Heart right ventricle (tissue), 16 donors: ENCODE measurements at regions of chr3 and their contacts with region 1.

Region 1: DNA sequence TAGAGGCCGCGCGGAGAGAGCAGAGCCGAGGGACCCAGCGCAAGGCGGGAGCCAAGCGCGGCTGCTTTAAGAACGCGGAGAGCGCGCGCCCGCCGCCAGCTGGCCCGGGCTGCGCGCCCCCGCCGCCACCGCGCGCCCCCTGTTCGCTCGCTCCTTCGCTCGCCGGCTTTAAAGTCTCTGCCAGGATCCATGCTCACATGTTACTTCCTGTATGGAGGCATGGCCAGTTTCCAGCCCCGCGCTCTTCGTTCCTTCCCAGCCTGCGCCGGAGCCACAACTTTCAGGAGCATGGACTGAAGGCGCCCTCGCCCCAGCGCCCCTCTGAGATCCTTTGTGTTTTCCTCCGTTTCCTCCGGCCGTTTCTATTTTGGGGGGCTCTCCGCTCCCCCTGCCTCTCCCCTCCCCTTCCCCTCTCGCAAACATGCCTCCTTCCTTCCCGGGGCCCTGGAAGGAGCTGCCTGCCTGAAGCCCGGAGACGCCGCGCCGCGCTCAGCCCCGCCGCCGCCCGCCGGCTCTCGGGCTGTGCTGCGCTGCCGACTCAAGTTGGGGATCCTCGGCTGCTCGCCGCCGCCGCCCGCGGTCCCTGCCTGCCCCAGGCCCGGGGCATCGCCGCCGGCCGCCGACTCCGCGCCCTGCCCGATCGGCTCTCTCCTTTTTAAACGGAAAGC is at the start of gene PTPRG:
- DNase-seq: peak; percentile 87 to 92
- ATAC-seq: peak; percentile 76 to 89 (median 80)
- H3K4me3 ChIP-seq: peak within 1 kb of the TSS; percentile 73 to 96 (median 90)
- H3K27ac ChIP-seq: peak within 1 kb of the TSS; percentile 89 to 99 (median 97)
- H3K4me1 ChIP-seq: peaks cover 5 to 40% (median 29%) of the 10 kb centered on the region in 9 donors
- H3K27me3 ChIP-seq: peaks cover 0 to 72% (median 0%) of the 10 kb centered on the region in 7 donors
- CTCF ChIP-seq: no peak
- total RNA-seq, gene PTPRG: 25.8 to 38.3 (median 33.1) TPM

Region 2: GRCh38 chr3:60126511-60127304 is 1434.8 kb before region 1 on chr3:
- intact Hi-C with region 1: no loop called
- DNase-seq: no peak
- ATAC-seq: no peak
- H3K4me3 ChIP-seq: no peak overlapping the region
- H3K27ac ChIP-seq: no peak overlapping the region
- H3K4me1 ChIP-seq: no peaks in the 10 kb centered on the region
- H3K27me3 ChIP-seq: no peaks in the 10 kb centered on the region
- CTCF ChIP-seq: no peak

Region 3: DNA sequence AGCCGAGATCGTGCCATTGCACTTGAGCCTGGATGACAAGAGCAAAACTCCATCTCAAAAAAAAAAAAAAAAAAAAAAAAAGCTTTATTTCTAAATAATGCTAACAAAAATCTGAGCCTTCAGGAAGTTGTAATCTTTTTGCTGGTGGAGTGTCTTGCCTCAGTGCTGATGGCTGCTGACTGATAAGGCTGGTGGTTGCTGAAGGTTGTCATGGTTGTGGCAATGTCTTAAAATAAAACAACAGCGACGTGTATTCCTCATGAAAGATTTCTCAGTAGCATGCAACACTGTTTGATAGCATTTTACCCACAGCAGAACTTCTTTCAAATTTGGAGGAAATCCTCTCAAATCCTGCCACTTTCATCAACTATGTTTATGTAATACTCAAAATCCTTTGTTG is 77.5 kb before region 1 on chr3:
- intact Hi-C with region 1: loop called in 1 of 10 experiments (anchors 10 kb)
- DNase-seq: no peak
- ATAC-seq: no peak
- H3K4me3 ChIP-seq: no peak overlapping the region
- H3K27ac ChIP-seq: no peak overlapping the region
- H3K4me1 ChIP-seq: no peaks in the 10 kb centered on the region
- H3K27me3 ChIP-seq: no peaks in the 10 kb centered on the region
- CTCF ChIP-seq: no peak

Region 4: GRCh38 chr3:61719278-61719977 is 157.9 kb after region 1 on chr3:
- intact Hi-C with region 1: loop called in 1 of 10 experiments (anchors 10 kb)
- DNase-seq: peak; percentile 23 to 28
- ATAC-seq: peak in 7 of 8 donors; percentile 81 to 90 (median 84)
- H3K4me3 ChIP-seq: no peak overlapping the region
- H3K27ac ChIP-seq: peak overlapping the region in 7 of 10 donors; percentile 48 to 74 (median 52)
- H3K4me1 ChIP-seq: peaks cover 0 to 68% (median 31%) of the 10 kb centered on the region in 9 donors
- H3K27me3 ChIP-seq: no peaks in the 10 kb centered on the region
- CTCF ChIP-seq: no peak

Region 5: DNA sequence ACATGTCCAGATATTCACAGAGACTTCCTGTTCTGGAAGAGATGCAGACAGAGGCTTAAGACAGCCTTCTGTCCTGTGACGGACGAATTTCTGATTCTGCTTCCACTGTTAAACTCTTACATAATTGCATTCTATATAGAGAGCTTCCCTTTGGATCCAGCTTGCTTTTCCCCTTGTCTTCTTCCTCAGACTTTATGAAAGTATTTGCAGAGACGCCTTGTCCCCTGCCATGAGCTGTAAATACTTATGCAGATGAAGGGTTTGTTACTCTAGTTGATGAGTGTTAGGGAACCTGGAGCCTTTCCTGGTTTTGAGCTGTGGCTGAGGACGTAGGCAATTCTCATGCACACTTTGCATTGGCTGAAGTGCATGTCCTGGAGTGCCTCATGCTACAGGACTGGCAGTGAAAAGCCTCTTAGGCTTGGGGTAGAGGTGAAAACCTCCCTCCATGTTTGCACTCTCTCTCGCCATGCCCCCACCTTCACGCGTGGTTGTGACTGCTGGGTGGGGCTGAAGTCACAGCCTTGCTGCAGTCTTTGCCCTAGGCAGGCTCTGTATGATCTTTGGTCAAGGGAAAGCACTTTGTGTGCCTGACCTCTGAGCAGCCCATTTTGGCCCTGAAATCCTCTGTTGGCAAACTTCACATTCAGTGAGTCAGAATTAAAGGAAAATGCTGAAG is 286.4 kb after region 1 on chr3:
- intact Hi-C with region 1: loop called in 9 of 10 experiments (anchors 2 to 10 kb)
- DNase-seq: peak; percentile 54 to 57
- ATAC-seq: peak; percentile 66 to 94 (median 74)
- H3K4me3 ChIP-seq: peak overlapping the region in 5 of 10 donors; percentile 2 to 18 (median 5)
- H3K27ac ChIP-seq: peak overlapping the region; percentile 65 to 90 (median 83)
- H3K4me1 ChIP-seq: peaks cover 19 to 82% (median 56%) of the 10 kb centered on the region in 9 donors
- H3K27me3 ChIP-seq: no peaks in the 10 kb centered on the region
- CTCF ChIP-seq: no peak

Region 6: DNA sequence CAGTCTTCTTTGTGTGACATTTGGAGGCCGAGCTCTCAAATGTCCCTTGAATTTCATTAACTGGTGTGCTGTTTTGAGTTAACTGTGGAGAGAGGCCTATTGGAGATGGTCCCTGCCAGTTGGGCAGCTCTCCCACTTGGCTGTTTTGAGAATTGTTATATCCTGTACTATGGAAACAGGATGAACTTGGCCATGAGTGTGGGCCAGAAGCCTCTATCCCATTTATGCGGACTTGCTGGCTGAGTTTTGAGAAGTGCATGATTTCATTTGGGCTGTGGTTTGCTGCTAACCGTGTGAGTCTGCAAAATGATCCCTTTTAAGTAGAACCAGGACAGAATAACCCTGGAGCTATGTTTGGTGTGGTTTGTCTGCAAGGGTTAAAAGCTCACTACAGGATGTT is 365.8 kb after region 1 on chr3:
- intact Hi-C with region 1: loop called in 6 of 10 experiments (anchors 2 to 10 kb)
- DNase-seq: peak; percentile 74 to 91
- ATAC-seq: peak; percentile 89 to 95 (median 91)
- H3K4me3 ChIP-seq: peak overlapping the region in 4 of 10 donors; percentile 0 to 28 (median 8)
- H3K27ac ChIP-seq: peak overlapping the region; percentile 51 to 81 (median 74)
- H3K4me1 ChIP-seq: peaks cover 22 to 73% (median 53%) of the 10 kb centered on the region in 9 donors
- H3K27me3 ChIP-seq: no peaks in the 10 kb centered on the region
- CTCF ChIP-seq: no peak

Region 7: DNA sequence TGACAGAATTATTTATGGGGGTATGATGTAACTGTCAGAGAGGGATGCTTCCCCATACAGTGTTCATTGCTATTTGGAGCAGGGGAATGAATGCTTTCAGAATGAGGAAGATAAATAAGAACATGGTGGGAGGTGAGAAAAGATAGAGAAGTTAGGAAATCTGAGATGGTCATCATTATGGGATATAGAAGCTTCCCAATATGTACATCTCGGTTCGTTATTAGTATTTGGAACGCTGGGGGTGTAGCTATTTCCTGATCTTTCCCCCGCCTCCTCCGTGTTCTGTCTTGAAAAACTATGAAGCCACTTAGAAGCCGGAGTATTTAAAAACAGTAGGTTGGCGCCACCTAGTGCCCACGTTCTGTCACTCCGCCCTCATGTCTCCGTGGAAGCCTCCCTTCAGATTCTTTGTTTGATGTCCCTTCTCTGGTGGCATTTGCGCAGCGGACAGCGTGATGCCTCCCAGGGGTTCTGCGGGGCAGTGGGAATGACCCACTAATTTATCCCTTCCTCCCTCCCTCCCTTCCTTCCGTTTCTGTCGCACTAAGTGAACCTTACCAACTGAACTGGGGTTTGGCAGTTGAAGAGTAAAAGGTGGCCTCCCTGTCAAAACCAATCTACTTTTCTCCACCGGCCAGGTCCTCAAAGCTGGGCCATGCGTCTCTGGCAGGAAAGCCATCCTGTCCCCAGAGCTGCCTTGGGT is 627.3 kb after region 1 on chr3:
- intact Hi-C with region 1: loop called (anchors 2 to 10 kb)
- DNase-seq: peak; percentile 68 to 74
- ATAC-seq: peak; percentile 27 to 83 (median 72)
- H3K4me3 ChIP-seq: peak overlapping the region in 3 of 10 donors; percentile 12 to 39 (median 18)
- H3K27ac ChIP-seq: peak overlapping the region in 1 of 10 donors; percentile 10
- H3K4me1 ChIP-seq: peaks cover 0 to 27% (median 21%) of the 10 kb centered on the region in 9 donors
- H3K27me3 ChIP-seq: no peaks in the 10 kb centered on the region
- CTCF ChIP-seq: peak; percentile 60 to 88 (median 83)